ENCODE measurements at regions of chr9 and their contacts with region 1.

Region 1: GRCh38 chr9:136631038-136632000 is 31.4 kb upstream of the EGFL7 start:
- DNase-seq: peak; percentile 82 to 86
- ATAC-seq: peak; percentile 86 to 95 (median 92)
- H3K4me3 ChIP-seq: no peak overlapping the region
- H3K27ac ChIP-seq: no peak overlapping the region
- H3K4me1 ChIP-seq: peaks cover under 1 to 28% (median 17%) of the 10 kb centered on the region in 9 donors
- H3K27me3 ChIP-seq: peaks cover 0 to 18% (median 0%) of the 10 kb centered on the region in 7 donors
- CTCF ChIP-seq: peak; percentile 75 to 90 (median 87)

Region 2: GRCh38 chr9:136488247-136489214 is 142.8 kb before region 1 on chr9:
- intact Hi-C with region 1: loop called in 8 of 10 experiments (anchors 1 to 2 kb)
- DNase-seq: peak; percentile 69 to 79
- ATAC-seq: peak in 5 of 8 donors; percentile 15 to 41 (median 35)
- H3K4me3 ChIP-seq: no peak overlapping the region
- H3K27ac ChIP-seq: no peak overlapping the region
- H3K4me1 ChIP-seq: peaks cover 8 to 44% (median 23%) of the 10 kb centered on the region in 9 donors
- H3K27me3 ChIP-seq: no peaks in the 10 kb centered on the region
- CTCF ChIP-seq: peak; percentile 97 to 100 (median 98)

Region 3: GRCh38 chr9:136539427-136540421 is 91.6 kb before region 1 on chr9:
- intact Hi-C with region 1: loop called in 2 of 10 experiments (anchors 5 to 10 kb)
- DNase-seq: peak; percentile 89 to 97
- ATAC-seq: peak; percentile 74 to 92 (median 84)
- H3K4me3 ChIP-seq: peak overlapping the region in 8 of 10 donors; percentile 9 to 96 (median 46)
- H3K27ac ChIP-seq: peak overlapping the region; percentile 76 to 100 (median 90)
- H3K4me1 ChIP-seq: peaks cover 38 to 94% (median 87%) of the 10 kb centered on the region in 9 donors
- H3K27me3 ChIP-seq: no peaks in the 10 kb centered on the region
- CTCF ChIP-seq: no peak

Region 4: DNA sequence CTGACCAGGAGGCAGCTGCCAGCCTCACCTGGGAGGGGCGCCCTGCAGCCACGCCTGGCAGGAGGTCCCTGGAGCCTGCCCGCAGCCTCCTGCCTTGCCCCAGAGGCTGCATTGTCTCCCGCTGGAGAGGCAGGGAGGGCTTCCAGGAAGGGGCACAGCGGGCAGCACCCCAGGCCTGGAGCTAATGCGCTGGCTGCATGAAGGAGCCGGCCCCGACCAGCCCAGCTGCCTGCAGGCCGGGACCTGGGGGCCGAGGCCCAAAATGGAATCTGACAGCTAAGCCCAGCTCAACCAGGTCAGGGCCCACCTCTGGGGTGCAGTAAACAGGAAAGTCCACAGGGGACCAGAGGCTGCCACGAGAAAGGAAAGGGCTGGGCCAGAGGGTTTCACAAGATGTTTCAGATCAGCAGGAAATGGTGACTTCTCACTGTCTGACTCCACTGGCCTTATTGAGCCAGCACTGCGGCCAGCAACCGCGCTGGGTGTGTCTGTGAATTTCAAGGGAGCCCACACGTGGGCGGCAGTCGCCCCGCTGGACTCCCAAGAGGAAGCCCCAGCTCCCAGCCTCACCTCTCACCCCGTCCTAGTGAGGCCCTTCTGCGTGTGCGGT is 66.8 kb before region 1 on chr9:
- intact Hi-C with region 1: loop called in 1 of 10 experiments (anchors 10 kb)
- DNase-seq: peak; percentile 69 to 73
- ATAC-seq: peak; percentile 40 to 73 (median 58)
- H3K4me3 ChIP-seq: peak overlapping the region in 5 of 10 donors; percentile 1 to 23 (median 5)
- H3K27ac ChIP-seq: peak overlapping the region; percentile 47 to 92 (median 84)
- H3K4me1 ChIP-seq: peaks cover 46 to 73% (median 70%) of the 10 kb centered on the region in 9 donors
- H3K27me3 ChIP-seq: no peaks in the 10 kb centered on the region
- CTCF ChIP-seq: peak in 5 of 9 donors; percentile 9 to 43 (median 28)